ENCODE measurements at regions of chr19 and their contacts with region 1.

Region 1: GRCh38 chr19:1131738-1132551 is 28.2 kb downstream of the GPX4 start:
- DNase-seq: peak; percentile 88
- H3K4me3 Mint-ChIP-seq: peak overlapping the region; percentile 89
- H3K27ac Mint-ChIP-seq: peak overlapping the region; percentile 86
- H3K4me1 Mint-ChIP-seq: peaks cover 26% of the 10 kb centered on the region
- H3K27me3 Mint-ChIP-seq: no peaks in the 10 kb centered on the region

Region 2: DNA sequence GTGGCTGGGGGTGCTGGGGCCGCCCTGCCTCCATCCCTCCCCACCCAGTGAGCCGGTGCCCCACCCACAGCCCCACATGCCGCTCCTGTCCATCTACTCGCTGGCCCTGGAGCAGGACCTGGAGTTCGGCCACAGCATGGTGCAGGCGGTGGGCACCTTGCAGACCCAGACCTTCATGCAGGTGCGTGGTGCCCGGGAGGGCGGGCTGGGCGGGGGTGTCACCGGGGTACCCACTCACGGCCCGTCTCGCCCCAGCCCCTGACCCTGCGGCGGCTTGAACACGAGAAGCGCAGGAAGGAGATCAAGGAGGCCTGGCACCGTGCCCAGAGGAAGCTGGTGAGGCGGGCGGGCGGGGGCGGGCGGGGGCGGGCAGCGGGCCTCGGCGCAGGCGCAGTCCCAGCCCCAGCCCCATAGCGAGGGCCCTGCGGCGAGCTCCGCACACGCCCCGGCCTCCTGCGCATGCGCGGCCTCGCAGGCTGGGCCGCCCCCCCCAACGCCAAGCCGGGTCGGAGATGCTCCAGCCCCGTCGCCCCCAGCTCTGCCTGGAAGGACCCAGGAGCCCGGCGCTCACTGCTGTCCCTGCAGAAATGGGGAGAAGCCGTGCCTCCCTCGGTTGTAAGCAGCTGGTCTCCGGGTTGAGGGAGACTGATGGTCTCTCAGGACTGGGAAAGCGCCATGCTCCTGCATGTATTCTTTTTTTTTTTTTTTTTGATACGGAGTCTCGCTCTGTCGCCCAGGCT is 57.2 kb before region 1 on chr19:
- intact Hi-C with region 1: loop called (anchors 5 kb)
- DNase-seq: peak; percentile 69
- H3K4me3 Mint-ChIP-seq: peak overlapping the region; percentile 79
- H3K27ac Mint-ChIP-seq: peak overlapping the region; percentile 90
- H3K4me1 Mint-ChIP-seq: peaks cover 35% of the 10 kb centered on the region
- H3K27me3 Mint-ChIP-seq: no peaks in the 10 kb centered on the region

Region 3: DNA sequence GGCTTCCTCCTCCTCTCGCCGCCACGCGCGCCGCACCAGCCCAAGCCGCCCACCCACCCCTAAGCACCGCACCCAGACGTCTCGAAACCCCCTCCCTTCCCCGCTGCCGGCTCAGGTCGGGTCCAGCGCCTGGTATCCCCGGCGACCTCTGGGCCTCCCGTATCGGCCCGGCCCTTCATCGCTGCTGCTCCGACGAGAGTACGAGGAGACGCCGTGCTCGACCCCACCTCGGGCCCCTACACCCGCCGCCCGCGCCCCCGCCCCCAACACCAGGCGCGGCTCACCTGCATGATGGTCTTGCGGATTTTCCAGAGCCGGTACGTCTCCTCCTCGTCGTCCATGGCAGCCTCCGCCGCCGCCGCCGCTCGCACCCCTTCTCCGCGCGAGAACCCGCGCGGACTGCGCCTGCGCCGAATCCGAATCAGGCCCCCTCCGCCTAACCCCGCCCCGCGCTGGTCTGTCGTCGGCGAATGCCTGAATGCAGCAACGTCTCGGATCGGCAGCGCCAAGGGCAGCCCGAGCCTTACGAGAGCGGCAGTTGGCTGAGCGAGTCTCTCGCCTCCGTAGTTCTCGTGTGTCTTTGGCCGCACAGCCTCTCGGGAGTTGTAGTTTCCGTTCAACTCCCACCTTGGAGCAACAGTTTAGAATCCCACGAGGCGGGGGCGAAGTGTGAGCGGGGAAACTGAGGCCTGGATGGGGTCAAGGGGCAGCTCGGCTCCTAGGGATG is 36.8 kb before region 1 on chr19 and contains the start of gene POLR2E:
- intact Hi-C with region 1: loop called (anchors 1 kb)
- DNase-seq: peak; percentile 98
- H3K4me3 Mint-ChIP-seq: peak within 1 kb of the TSS; percentile 94
- H3K27ac Mint-ChIP-seq: peak within 1 kb of the TSS; percentile 97
- H3K4me1 Mint-ChIP-seq: peaks cover 41% of the 10 kb centered on the region
- H3K27me3 Mint-ChIP-seq: peaks cover 2% of the 10 kb centered on the region
- total RNA-seq, gene POLR2E: 265 and 282 TPM in 2 replicates

Region 4: GRCh38 chr19:1103708-1104310 is 28.1 kb before region 1 on chr19 and contains the start of gene GPX4:
- intact Hi-C with region 1: loop called (anchors 1 kb)
- DNase-seq: peak; percentile 96
- H3K4me3 Mint-ChIP-seq: peak within 1 kb of the TSS; percentile 80
- H3K27ac Mint-ChIP-seq: peak within 1 kb of the TSS; percentile 90
- H3K4me1 Mint-ChIP-seq: peaks cover 30% of the 10 kb centered on the region
- H3K27me3 Mint-ChIP-seq: peaks cover 2% of the 10 kb centered on the region
- total RNA-seq, gene GPX4: 236 and 241 TPM in 2 replicates

Region 5: DNA sequence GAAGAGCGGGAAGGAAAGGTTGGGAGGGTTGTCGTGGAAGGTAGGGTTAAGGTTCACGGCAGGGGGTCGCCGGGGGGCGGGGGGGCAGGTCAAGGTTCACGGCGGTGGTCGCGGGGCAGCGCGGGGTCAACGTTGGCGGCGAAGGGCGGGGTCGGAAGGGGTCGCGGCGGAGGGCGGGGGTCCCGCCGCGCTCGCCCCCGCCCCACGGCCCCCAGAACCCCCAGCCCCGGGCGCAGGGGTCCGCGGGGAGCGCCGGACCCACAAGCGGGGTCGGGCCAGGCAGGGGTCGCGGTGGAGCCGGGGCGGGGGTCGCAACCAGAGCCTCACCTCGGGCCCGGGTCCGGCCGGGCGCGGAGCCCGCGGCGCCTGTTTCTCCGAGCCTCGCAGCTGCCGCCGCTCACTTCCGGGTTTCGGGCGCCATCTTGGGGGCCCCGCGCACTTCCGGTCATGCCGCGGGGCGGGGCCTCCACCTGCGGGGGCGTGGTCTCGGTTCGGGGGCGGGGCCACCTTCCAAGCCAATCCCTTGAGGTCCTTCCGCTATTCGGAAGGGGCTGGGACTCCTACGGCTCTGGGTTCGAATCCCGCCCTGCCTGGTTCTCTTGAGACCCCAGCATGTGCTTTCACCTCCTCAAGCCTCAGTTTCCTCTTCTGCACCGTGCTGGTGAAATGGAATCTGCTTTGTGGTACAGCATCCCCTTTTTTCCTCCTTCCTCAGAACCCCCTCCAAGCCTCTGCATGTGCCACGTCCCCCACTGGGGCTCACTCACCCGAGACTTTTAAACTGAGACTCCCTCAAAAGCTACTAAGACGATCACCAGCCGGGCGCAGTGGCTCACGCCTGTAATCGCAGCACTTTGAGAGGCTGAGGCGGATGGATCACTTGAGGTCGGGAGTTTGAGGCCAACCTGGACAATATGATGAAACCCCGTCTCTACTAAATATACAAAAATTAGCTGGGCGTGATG is 42.2 kb after region 1 on chr19 and contains the start of gene SBNO2:
- intact Hi-C with region 1: loop called (anchors 1 kb)
- DNase-seq: peak; percentile 88
- H3K4me3 Mint-ChIP-seq: peak within 1 kb of the TSS; percentile 89
- H3K27ac Mint-ChIP-seq: peak within 1 kb of the TSS; percentile 88
- H3K4me1 Mint-ChIP-seq: peaks cover 25% of the 10 kb centered on the region
- H3K27me3 Mint-ChIP-seq: no peaks in the 10 kb centered on the region
- total RNA-seq, gene SBNO2: 95.5 and 96.9 TPM in 2 replicates

Region 6: DNA sequence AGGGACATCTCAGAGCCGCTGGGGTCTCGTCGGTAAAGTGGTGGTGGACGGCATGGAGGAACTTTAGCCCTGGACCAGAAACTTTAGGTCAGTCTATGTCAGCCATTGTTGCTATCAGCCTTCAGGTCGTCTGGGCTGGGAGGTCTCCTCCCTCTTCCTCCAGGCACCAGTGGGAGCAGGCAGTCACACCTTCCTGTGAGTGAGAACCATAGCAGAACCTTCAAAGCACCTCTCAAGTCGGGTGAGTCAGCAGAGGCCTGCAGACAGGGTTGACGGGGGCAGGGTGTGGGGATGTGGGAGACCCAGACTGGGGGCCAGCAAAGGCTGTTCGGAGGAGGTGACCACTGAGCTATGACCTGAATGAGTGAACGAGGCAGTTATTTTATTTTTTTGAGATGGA is 57.5 kb after region 1 on chr19:
- intact Hi-C with region 1: loop called (anchors 5 kb)
- DNase-seq: peak; percentile 56
- H3K4me3 Mint-ChIP-seq: peak overlapping the region; percentile 46
- H3K27ac Mint-ChIP-seq: peak overlapping the region; percentile 83
- H3K4me1 Mint-ChIP-seq: peaks cover 34% of the 10 kb centered on the region
- H3K27me3 Mint-ChIP-seq: no peaks in the 10 kb centered on the region

Region 7: GRCh38 chr19:1383311-1384084 is 251.6 kb after region 1 on chr19 and contains the start of gene NDUFS7:
- intact Hi-C with region 1: loop called (anchors 5 kb)
- DNase-seq: peak; percentile 89
- H3K4me3 Mint-ChIP-seq: peak within 1 kb of the TSS; percentile 84
- H3K27ac Mint-ChIP-seq: peak within 1 kb of the TSS; percentile 99
- H3K4me1 Mint-ChIP-seq: peaks cover 18% of the 10 kb centered on the region
- H3K27me3 Mint-ChIP-seq: peaks cover 9% of the 10 kb centered on the region
- total RNA-seq, gene NDUFS7: 97.9 and 98.8 TPM in 2 replicates

Measured in activated T-helper 1 cell treated with anti-CD3 and anti-CD28 coated beads, Interleukin-12 subunit alpha, Interleukin-12 subunit beta, Interleukin-2, Interleukin-4 antibody, amounts not matched to agents 30 ng/mL and 10 ng/mL and 1 ng/mL, durations not matched to agents 14 hours and 24 hours and 36 hours (primary cell).